ENCODE measurements at regions of chr5 and their contacts with region 1.

Region 1: GRCh38 chr5:172454358-172455086 is at the start of gene SH3PXD2B:
- DNase-seq: no peak
- ATAC-seq: peak; percentile 69
- H3K4me3 ChIP-seq: peak within 1 kb of the TSS; percentile 98
- H3K27ac ChIP-seq: peak within 1 kb of the TSS; percentile 98
- H3K4me1 ChIP-seq: peaks cover 24% of the 10 kb centered on the region
- H3K27me3 ChIP-seq: no peaks in the 10 kb centered on the region
- CTCF ChIP-seq: no peak
- POLR2A ChIP-seq: peak; percentile 24; the same call in 1 of the 2 replicates
- RAD21 ChIP-seq: no peak
- total RNA-seq, gene SH3PXD2B: 7.8 and 8.2 TPM in 2 replicates

Region 2: GRCh38 chr5:172106511-172107356 is 347.8 kb before region 1 on chr5:
- CTCF ChIA-PET with region 1: no interaction called
- POLR2A ChIA-PET with region 1: no interaction called
- dilution Hi-C with region 1: no loop called
- in situ Hi-C with region 1: no loop called
- intact Hi-C with region 1: loop called (anchors 10 kb)
- DNase-seq: no peak
- ATAC-seq: peak; percentile 31
- H3K4me3 ChIP-seq: 0 out of 2 replicates have a peak overlapping the region, but pooled peaks have one; percentile 14
- H3K27ac ChIP-seq: peak overlapping the region; percentile 71; the same call in 1 of the 2 replicates
- H3K4me1 ChIP-seq: peaks cover 38% of the 10 kb centered on the region
- H3K27me3 ChIP-seq: no peaks in the 10 kb centered on the region
- CTCF ChIP-seq: peak; percentile 77
- POLR2A ChIP-seq: no peak
- RAD21 ChIP-seq: peak; percentile 72

Region 3: GRCh38 chr5:172303572-172304335 is 150.8 kb before region 1 on chr5:
- CTCF ChIA-PET with region 1: no interaction called
- POLR2A ChIA-PET with region 1: no interaction called
- dilution Hi-C with region 1: no loop called
- in situ Hi-C with region 1: no loop called
- intact Hi-C with region 1: loop called (anchors 5 kb)
- DNase-seq: no peak
- ATAC-seq: peak; percentile 35; the same call in 1 of the 2 replicates
- H3K4me3 ChIP-seq: no peak overlapping the region
- H3K27ac ChIP-seq: no peak overlapping the region
- H3K4me1 ChIP-seq: peaks cover 2% of the 10 kb centered on the region; the same call in 1 of the 2 replicates
- H3K27me3 ChIP-seq: no peaks in the 10 kb centered on the region
- CTCF ChIP-seq: no peak
- POLR2A ChIP-seq: peak; percentile 23; the same call in 1 of the 2 replicates
- RAD21 ChIP-seq: no peak

Region 4: GRCh38 chr5:172356047-172356446 is 98.5 kb before region 1 on chr5:
- CTCF ChIA-PET with region 1: no interaction called
- POLR2A ChIA-PET with region 1: no interaction called
- dilution Hi-C with region 1: no loop called
- in situ Hi-C with region 1: no loop called
- intact Hi-C with region 1: loop called (anchors 5 kb)
- DNase-seq: no peak
- ATAC-seq: no peak
- H3K4me3 ChIP-seq: no peak overlapping the region
- H3K27ac ChIP-seq: peak overlapping the region; percentile 4; the same call in 1 of the 2 replicates
- H3K4me1 ChIP-seq: peaks cover 15% of the 10 kb centered on the region
- H3K27me3 ChIP-seq: no peaks in the 10 kb centered on the region
- CTCF ChIP-seq: no peak
- POLR2A ChIP-seq: no peak
- RAD21 ChIP-seq: no peak

Region 5: DNA sequence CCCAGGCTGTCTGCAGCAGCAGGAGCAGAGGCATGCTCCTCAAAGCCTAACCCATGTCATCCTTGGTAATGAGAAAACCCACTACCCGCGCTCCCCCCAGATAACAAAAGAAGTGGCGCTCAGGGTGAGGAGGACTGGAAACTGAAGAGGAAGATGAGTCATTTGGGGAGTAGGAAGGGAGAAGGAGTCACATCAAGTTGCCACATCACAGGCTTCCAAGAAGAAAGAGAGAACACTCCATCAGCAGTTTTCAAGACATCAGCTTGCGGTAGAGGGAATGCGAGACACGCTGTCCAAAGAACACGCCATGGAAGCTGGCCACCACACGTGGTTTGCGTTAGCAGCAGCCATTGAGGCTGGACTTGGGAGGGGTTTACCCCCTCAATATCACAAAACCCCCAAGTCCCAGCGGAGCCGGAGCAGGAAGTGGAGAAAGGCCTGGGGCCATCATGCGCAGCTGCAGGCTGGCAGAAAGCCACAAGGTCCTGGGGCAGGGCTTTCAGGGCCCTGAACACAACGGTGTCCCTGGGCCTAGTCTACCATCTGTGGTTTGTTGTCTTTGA is 41.7 kb before region 1 on chr5:
- CTCF ChIA-PET with region 1: no interaction called
- POLR2A ChIA-PET with region 1: no interaction called
- dilution Hi-C with region 1: no loop called
- in situ Hi-C with region 1: no loop called
- intact Hi-C with region 1: loop called (anchors 5 kb)
- DNase-seq: peak; percentile 95
- ATAC-seq: peak; percentile 33
- H3K4me3 ChIP-seq: no peak overlapping the region
- H3K27ac ChIP-seq: peak overlapping the region; percentile 74
- H3K4me1 ChIP-seq: peaks cover 25% of the 10 kb centered on the region
- H3K27me3 ChIP-seq: no peaks in the 10 kb centered on the region
- CTCF ChIP-seq: no peak
- POLR2A ChIP-seq: no peak
- RAD21 ChIP-seq: no peak

Region 6: DNA sequence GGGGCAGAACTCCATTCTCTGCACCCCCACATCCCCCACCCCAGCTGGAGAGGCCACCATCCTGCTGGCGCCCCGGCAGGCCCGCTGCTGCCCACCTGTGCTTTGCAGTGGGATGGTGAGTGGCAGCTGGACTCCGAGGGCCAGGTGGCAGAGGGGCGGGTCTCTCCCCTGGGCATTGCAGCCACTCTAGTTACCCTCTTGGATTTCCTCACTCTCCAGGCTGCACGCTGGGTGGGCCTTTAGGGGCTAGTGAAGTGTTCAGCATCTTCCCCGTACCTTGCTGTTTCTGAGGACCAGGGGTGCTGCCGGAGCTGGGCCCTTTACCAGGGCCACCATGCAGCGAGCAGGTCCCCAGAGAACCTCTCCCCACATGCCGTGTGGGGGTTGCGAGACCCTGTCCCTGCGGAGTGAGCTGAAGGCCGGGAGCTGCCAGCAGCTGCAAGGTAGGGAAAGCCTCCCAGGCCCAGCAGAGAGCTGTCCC is 88.2 kb after region 1 on chr5:
- CTCF ChIA-PET with region 1: no interaction called
- POLR2A ChIA-PET with region 1: no interaction called
- dilution Hi-C with region 1: no loop called
- in situ Hi-C with region 1: no loop called
- intact Hi-C with region 1: no loop called
- DNase-seq: no peak
- ATAC-seq: no peak
- H3K4me3 ChIP-seq: no peak overlapping the region
- H3K27ac ChIP-seq: no peak overlapping the region
- H3K4me1 ChIP-seq: no peaks in the 10 kb centered on the region
- H3K27me3 ChIP-seq: peaks cover 53% of the 10 kb centered on the region
- CTCF ChIP-seq: no peak
- POLR2A ChIP-seq: no peak
- RAD21 ChIP-seq: no peak

Region 7: DNA sequence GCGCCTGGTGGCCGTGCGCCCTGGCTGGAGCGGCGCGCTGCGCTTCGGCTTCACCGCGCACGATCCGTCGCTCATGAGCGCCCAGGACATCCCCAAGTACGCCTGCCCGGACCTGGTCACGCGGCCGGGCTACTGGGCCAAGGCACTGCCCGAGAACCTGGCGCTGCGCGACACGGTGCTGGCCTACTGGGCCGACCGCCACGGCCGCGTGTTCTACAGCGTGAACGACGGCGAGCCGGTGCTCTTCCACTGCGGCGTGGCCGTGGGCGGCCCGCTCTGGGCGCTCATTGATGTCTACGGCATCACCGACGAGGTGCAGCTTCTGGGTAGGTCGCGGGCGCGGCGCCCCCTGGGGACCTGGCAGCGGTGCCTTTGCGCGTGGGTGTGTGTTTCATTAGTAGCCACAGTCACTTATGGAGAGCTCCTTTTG is 215.5 kb after region 1 on chr5:
- CTCF ChIA-PET with region 1: no interaction called
- POLR2A ChIA-PET with region 1: no interaction called
- dilution Hi-C with region 1: no loop called
- in situ Hi-C with region 1: no loop called
- intact Hi-C with region 1: no loop called
- DNase-seq: no peak
- ATAC-seq: no peak
- H3K4me3 ChIP-seq: no peak overlapping the region
- H3K27ac ChIP-seq: no peak overlapping the region
- H3K4me1 ChIP-seq: peaks cover 12% of the 10 kb centered on the region; the same call in 1 of the 2 replicates
- H3K27me3 ChIP-seq: no peaks in the 10 kb centered on the region
- CTCF ChIP-seq: no peak
- POLR2A ChIP-seq: no peak
- RAD21 ChIP-seq: no peak

Measured in IMR-90 (cell line).